Esophagus squamous epithelium (tissue), 5 donors: ENCODE measurements at regions of chr11 and their contacts with region 1.

Region 1: GRCh38 chr11:74559934-74560309 is 32.5 kb upstream of the POLD3 start:
- DNase-seq: no peak
- H3K4me3 ChIP-seq: no peak overlapping the region
- H3K27ac ChIP-seq: no peak overlapping the region
- H3K4me1 ChIP-seq: no peaks in the 10 kb centered on the region
- H3K27me3 ChIP-seq: no peaks in the 10 kb centered on the region
- CTCF ChIP-seq: no peak
- POLR2A ChIP-seq: no peak

Region 2: DNA sequence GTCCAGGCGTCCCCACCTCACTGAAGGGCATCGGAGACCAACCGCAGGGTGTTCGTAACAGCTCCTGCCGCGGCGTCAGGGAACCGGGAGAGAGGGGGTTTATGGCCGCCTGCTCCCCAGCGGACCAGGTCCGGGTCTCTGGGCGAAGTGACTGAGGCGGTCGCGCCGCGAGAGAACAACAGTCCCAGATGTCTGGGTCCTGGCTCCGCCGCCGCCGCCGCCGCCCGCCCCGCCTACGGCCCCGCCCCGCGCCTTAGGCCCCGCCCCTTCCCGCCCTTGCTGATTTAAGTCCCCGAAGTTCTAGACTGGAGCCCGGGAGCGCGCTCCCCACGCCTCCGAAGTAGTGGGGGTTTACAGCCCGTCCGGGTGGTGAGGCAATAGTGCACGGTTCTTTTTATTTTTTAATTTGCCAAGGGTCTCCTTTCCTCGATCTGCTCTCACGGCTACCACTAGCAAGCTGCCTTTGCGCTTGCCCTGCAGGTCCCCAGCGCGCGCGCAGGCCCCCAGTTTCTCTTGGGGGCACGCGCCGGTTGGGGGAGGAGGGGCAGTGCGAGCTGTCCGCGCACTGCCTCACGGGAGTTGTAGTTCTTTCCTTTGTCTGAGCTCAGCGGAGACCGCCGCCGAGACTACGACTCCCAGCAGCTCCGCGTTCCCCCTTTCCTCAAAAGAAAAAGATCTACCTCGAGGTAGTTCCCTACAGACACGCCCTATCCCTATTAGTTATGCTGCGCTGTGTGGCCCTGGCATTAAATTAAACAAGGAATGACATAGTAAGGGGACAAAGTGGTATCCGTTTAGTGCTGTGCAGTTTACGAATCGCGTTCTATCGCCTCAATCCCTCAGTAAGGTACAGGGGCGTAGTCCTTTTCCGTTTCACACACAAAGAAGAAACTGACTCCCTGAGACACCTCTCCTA is 161.4 kb before region 1 on chr11 and contains the start of gene PGM2L1:
- intact Hi-C with region 1: loop called (anchors 10 kb)
- DNase-seq: peak; percentile 85
- H3K4me3 ChIP-seq: peak within 1 kb of the TSS; percentile 71 to 88 (median 79)
- H3K27ac ChIP-seq: peak within 1 kb of the TSS; percentile 84 to 94 (median 89)
- H3K4me1 ChIP-seq: peaks cover 0 to 20% (median 9%) of the 10 kb centered on the region in 3 donors
- H3K27me3 ChIP-seq: no peaks in the 10 kb centered on the region
- CTCF ChIP-seq: peak in 1 of 6 experiments; percentile 25
- POLR2A ChIP-seq: peak in 3 of 4 donors; percentile 43 to 59 (median 50)
- total RNA-seq, gene PGM2L1: 0.42 to 2.0 (median 0.89) TPM

Region 3: DNA sequence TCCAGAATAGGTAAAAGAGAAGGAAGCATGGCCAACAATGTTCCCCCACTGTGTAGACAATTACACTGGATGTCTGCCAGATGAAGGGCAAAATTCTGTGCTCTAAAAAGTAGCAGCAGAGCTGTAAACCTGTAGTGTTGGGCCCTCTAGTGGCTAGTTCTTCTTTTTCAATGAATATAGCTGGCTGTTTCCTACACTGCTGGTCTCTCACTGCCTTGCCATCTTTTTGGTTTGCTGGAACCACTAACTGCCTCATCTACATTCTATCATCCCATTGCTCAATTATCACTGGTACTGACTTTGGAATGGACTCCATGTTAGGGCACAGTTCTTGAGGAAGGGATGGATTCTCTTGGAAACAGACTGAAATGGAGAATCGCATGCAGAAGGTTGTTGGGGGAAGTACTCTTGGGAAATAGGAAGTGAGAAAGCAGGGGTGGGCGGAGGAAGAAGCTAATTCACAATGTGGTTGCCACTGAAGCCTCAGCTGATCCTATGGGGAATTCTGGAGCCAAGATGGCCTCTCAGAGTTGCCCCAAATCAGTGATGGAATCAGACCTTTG is 110.5 kb before region 1 on chr11:
- intact Hi-C with region 1: no loop called
- DNase-seq: no peak
- H3K4me3 ChIP-seq: no peak overlapping the region
- H3K27ac ChIP-seq: no peak overlapping the region
- H3K4me1 ChIP-seq: peaks cover 0 to 30% (median 0%) of the 10 kb centered on the region in 3 donors
- H3K27me3 ChIP-seq: no peaks in the 10 kb centered on the region
- CTCF ChIP-seq: peak; percentile 62 to 82 (median 69)
- POLR2A ChIP-seq: no peak